ENCODE measurements at regions of chr10 and their contacts with region 1.

Region 1: DNA sequence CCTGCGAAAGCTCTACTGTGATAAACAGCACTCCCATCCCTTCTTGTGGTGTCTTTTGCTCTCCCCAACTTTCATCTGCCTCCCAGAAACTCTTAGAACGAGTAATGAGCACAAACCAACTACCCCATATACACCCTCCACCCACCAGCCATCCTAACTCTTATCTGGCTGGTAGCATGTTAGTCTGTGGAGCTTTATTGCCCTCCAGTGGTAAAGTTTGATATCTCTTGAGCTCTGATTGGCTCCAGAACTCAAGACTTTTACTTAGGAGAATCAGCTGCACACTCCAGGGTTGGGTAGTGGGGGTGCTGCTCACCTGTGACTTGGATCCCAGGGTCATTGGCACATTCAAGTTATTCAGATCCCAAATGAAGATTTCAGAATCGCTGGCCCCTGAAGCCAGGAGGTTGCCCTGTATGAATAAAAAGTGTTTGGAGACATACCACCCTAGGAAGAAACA is 10.9 kb downstream of the SEC31B start:
- DNase-seq: peak; percentile 64 to 82 (median 78)
- H3K4me3 ChIP-seq: no peak overlapping the region
- H3K27ac ChIP-seq: no peak overlapping the region
- H3K4me1 ChIP-seq: peaks cover 3 to 28% (median 11%) of the 10 kb centered on the region in 4 experiments
- H3K27me3 ChIP-seq: no peaks in the 10 kb centered on the region

Region 2: GRCh38 chr10:100303724-100304319 is 204.9 kb before region 1 on chr10:
- CTCF ChIA-PET with region 1: interaction called, 11 read pairs
- POLR2A ChIA-PET with region 1: no interaction called
- DNase-seq: peak; percentile 13 to 43 (median 43)
- H3K4me3 ChIP-seq: no peak overlapping the region
- H3K27ac ChIP-seq: no peak overlapping the region
- H3K4me1 ChIP-seq: no peaks in the 10 kb centered on the region
- H3K27me3 ChIP-seq: peaks cover 2 to 10% (median 6%) of the 10 kb centered on the region in 5 experiments

Region 3: GRCh38 chr10:100338434-100339036 is 170.2 kb before region 1 on chr10:
- CTCF ChIA-PET with region 1: interaction called, 110 read pairs
- POLR2A ChIA-PET with region 1: no interaction called
- DNase-seq: peak; percentile 53 to 73 (median 62)
- H3K4me3 ChIP-seq: no peak overlapping the region
- H3K27ac ChIP-seq: no peak overlapping the region
- H3K4me1 ChIP-seq: peaks cover 0 to 24% (median 3%) of the 10 kb centered on the region in 4 experiments
- H3K27me3 ChIP-seq: peaks cover 0 to 9% (median 2%) of the 10 kb centered on the region in 5 experiments

Region 4: GRCh38 chr10:100433253-100434240 is 75.2 kb before region 1 on chr10:
- CTCF ChIA-PET with region 1: interaction called, 69 read pairs
- POLR2A ChIA-PET with region 1: no interaction called
- DNase-seq: peak; percentile 91 to 97 (median 92)
- H3K4me3 ChIP-seq: no peak overlapping the region
- H3K27ac ChIP-seq: no peak overlapping the region
- H3K4me1 ChIP-seq: no peaks in the 10 kb centered on the region
- H3K27me3 ChIP-seq: no peaks in the 10 kb centered on the region

Region 5: DNA sequence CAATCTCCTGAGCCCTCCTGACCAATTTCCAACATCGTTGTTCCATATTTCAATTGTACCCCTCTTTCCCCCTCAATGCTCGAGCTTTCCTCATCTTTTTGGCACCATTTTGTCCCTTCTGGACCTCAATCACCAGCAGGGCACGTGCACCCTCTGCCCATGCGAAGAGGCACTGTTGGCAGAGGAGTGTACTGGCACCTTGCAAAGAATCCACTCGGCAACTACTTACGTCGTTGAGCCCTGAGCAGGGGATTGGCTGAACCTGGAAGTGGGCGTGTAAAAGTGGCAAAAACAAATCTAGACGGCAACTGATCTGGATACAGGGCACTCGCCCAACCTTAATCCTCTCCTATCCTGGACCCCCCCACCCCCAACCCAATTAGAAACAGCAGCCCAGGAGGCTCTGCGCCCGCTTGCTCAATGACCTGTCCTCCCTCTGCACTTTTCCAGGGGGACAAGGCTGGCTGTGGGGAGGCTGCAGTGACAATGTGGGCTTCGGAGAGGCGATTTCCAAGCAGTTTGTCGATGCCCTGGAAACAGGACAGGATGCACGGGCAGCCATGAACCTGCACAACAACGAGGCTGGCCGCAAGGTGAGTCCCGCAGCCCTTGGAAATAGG is 27.1 kb before region 1 on chr10:
- CTCF ChIA-PET with region 1: interaction called, 22 read pairs
- POLR2A ChIA-PET with region 1: no interaction called
- DNase-seq: peak; percentile 91 to 96 (median 94)
- H3K4me3 ChIP-seq: peak overlapping the region in 6 of 7 experiments; percentile 45 to 73 (median 61)
- H3K27ac ChIP-seq: no peak overlapping the region
- H3K4me1 ChIP-seq: peaks cover 0 to 22% (median 15%) of the 10 kb centered on the region in 4 experiments
- H3K27me3 ChIP-seq: peaks cover 2 to 41% (median 13%) of the 10 kb centered on the region in 5 experiments

Region 6: DNA sequence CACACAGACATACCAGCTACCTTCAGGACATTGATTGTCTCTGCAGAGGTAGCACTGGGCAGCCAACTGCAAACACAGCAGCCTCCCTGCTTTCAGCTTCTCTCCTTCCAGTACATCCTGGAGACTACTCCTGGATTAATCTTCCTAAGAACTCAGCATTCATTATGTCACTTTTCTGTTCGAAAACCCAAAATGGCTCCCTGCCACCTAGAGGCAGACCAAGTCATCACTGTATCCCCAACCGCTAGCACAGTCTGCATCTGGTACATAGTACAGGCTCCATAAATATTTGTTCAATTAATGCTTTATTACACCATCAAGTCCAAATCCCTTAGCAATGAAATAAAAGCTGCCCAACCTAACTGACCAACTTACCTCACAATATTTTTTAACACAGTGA is 15.9 kb after region 1 on chr10:
- CTCF ChIA-PET with region 1: interaction called, 10 read pairs
- POLR2A ChIA-PET with region 1: interaction called, 4 read pairs
- DNase-seq: no peak
- H3K4me3 ChIP-seq: no peak overlapping the region
- H3K27ac ChIP-seq: no peak overlapping the region
- H3K4me1 ChIP-seq: peaks cover 6 to 17% (median 14%) of the 10 kb centered on the region in 4 experiments
- H3K27me3 ChIP-seq: peaks cover 0 to 12% (median 4%) of the 10 kb centered on the region in 5 experiments

Region 7: DNA sequence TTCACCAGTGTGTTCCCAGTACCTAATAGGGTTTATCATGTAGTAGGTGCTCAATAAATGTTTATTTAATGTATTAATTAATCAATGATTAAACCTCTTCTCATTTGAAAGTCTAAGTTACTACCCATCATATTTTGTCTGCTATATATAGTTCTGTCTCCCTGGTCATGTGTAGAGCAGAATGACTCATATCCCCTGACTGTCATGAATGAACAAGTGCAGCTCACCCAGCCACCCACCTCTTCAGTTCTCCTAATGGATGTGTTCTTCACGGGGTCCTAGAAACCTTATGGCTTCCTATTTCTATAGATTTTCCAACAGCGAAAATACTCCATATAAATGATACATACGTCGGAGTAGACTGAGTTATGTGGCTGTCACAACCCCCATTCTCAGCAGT is 91.5 kb after region 1 on chr10:
- CTCF ChIA-PET with region 1: no interaction called
- POLR2A ChIA-PET with region 1: no interaction called
- DNase-seq: no peak
- H3K4me3 ChIP-seq: no peak overlapping the region
- H3K27ac ChIP-seq: no peak overlapping the region
- H3K4me1 ChIP-seq: no peaks in the 10 kb centered on the region
- H3K27me3 ChIP-seq: peaks cover 6 to 51% (median 13%) of the 10 kb centered on the region in 5 experiments

Measured in common myeloid progenitor, CD34-positive (primary cell).